PC-3 (cell line): ENCODE measurements at regions of chr1 and their contacts with region 1.

Region 1: GRCh38 chr1:244231572-244232315 is 180.7 kb downstream of the ZBTB18 start:
- DNase-seq: peak; percentile 79
- ATAC-seq: peak; percentile 76
- H3K4me3 ChIP-seq: peak overlapping the region; percentile 68
- H3K27ac ChIP-seq: peak overlapping the region; percentile 68
- H3K4me1 ChIP-seq: peaks cover 26% of the 10 kb centered on the region
- H3K27me3 ChIP-seq: no peaks in the 10 kb centered on the region
- CTCF ChIP-seq: no peak

Region 2: GRCh38 chr1:243917177-243917862 is 314.4 kb before region 1 on chr1:
- CTCF ChIA-PET with region 1: no interaction called
- POLR2A ChIA-PET with region 1: interaction called, 20 read pairs
- intact Hi-C with region 1: no loop called
- DNase-seq: peak; percentile 93
- ATAC-seq: peak; percentile 83
- H3K4me3 ChIP-seq: peak overlapping the region; percentile 70
- H3K27ac ChIP-seq: peak overlapping the region; percentile 43
- H3K4me1 ChIP-seq: peaks cover 29% of the 10 kb centered on the region
- H3K27me3 ChIP-seq: no peaks in the 10 kb centered on the region
- CTCF ChIP-seq: peak; percentile 31; the same call in 1 of the 2 replicates

Region 3: GRCh38 chr1:244887281-244887680 is 655.5 kb after region 1 on chr1:
- CTCF ChIA-PET with region 1: no interaction called
- POLR2A ChIA-PET with region 1: no interaction called
- intact Hi-C with region 1: no loop called
- DNase-seq: peak; percentile 75
- ATAC-seq: no peak
- H3K4me3 ChIP-seq: no peak overlapping the region
- H3K27ac ChIP-seq: no peak overlapping the region
- H3K4me1 ChIP-seq: peaks cover under 1% of the 10 kb centered on the region
- H3K27me3 ChIP-seq: no peaks in the 10 kb centered on the region
- CTCF ChIP-seq: no peak